ENCODE measurements at regions of chr5 and their contacts with region 1.

Region 1: DNA sequence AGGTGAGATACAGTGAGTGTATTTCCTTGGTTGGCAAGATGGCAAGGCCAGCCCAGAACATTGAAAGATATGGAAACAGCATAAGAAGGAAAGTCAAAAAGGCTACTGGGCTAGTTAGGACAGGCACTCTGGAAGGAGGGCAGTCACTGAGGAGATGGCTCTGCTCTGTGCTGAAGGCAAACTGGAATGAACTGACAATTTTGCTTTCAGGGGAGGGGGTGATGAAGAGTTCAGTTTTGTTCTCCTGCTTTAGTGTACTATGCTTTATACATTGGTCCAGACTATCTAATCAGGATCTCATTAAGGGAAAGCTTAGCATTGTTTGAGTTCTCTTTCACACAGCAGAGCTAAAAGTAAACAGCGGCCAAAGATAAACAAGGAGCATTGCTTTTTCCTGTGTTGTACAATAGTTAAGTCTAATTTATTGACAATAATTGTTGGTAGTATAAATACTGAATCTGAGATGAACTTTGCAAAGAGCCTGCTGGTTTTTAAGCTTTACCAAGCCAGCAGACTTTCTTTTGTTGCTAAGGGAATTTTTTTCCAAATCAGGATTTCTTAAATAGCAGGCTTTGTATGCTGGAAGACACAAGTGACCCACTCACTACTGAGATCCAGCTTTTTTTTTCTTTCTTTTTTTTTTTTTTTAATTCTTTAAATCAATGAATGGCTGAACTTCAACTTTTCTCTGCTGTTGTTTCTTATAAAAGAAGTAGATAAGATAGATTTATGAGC is 355.5 kb downstream of the ARRDC3 start:
- DNase-seq: no peak
- H3K4me3 ChIP-seq: no peak overlapping the region
- H3K27ac ChIP-seq: no peak overlapping the region
- H3K4me1 ChIP-seq: no peaks in the 10 kb centered on the region
- CTCF ChIP-seq: no peak

Region 2: DNA sequence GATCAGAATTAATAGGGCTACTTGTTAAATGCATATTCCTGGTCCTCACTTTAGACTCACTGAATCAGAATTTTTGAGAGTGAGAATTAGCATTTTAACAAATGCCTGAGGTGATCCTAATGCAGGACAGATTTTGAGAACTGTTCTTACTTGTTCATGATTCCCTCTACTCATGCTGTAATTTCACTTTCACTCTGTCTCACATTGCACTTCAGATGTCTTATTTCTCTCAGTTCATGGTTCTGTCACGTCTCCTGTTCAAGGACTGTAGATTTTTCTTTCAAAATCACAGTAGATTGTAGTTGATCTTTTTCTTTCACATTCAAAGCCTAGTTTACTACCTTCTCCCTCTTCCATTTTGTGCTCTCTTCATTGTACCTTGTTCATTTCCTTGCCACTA is 414.7 kb before region 1 on chr5:
- CTCF ChIA-PET with region 1: no interaction called
- POLR2A ChIA-PET with region 1: no interaction called
- intact Hi-C with region 1: no loop called
- DNase-seq: no peak
- H3K4me3 ChIP-seq: no peak overlapping the region
- H3K27ac ChIP-seq: no peak overlapping the region
- H3K4me1 ChIP-seq: no peaks in the 10 kb centered on the region
- CTCF ChIP-seq: no peak

Region 3: GRCh38 chr5:90898330-90899013 is 129.1 kb before region 1 on chr5:
- CTCF ChIA-PET with region 1: no interaction called
- POLR2A ChIA-PET with region 1: no interaction called
- intact Hi-C with region 1: no loop called
- DNase-seq: no peak
- H3K4me3 ChIP-seq: no peak overlapping the region
- H3K27ac ChIP-seq: no peak overlapping the region
- H3K4me1 ChIP-seq: no peaks in the 10 kb centered on the region
- CTCF ChIP-seq: no peak

Region 4: GRCh38 chr5:91079037-91079436 is 51.5 kb after region 1 on chr5:
- CTCF ChIA-PET with region 1: no interaction called
- POLR2A ChIA-PET with region 1: no interaction called
- intact Hi-C with region 1: loop called (anchors 2 kb)
- DNase-seq: no peak
- H3K4me3 ChIP-seq: no peak overlapping the region
- H3K27ac ChIP-seq: no peak overlapping the region
- H3K4me1 ChIP-seq: no peaks in the 10 kb centered on the region
- CTCF ChIP-seq: no peak